ENCODE measurements at regions of chr11 and their contacts with region 1.

Region 1: GRCh38 chr11:9137293-9138132 is 46.1 kb upstream of the SCUBE2 start:
- DNase-seq: peak; percentile 27
- ATAC-seq: peak; percentile 100
- H3K4me3 ChIP-seq: no peak overlapping the region
- H3K27ac ChIP-seq: no peak overlapping the region
- H3K4me1 ChIP-seq: no peaks in the 10 kb centered on the region
- H3K27me3 ChIP-seq: no peaks in the 10 kb centered on the region
- CTCF ChIP-seq: peak; percentile 91 to 99 (median 97)
- EP300 ChIP-seq: no peak
- POLR2A ChIP-seq: no peak
- RAD21 ChIP-seq: peak; percentile 95

Region 2: DNA sequence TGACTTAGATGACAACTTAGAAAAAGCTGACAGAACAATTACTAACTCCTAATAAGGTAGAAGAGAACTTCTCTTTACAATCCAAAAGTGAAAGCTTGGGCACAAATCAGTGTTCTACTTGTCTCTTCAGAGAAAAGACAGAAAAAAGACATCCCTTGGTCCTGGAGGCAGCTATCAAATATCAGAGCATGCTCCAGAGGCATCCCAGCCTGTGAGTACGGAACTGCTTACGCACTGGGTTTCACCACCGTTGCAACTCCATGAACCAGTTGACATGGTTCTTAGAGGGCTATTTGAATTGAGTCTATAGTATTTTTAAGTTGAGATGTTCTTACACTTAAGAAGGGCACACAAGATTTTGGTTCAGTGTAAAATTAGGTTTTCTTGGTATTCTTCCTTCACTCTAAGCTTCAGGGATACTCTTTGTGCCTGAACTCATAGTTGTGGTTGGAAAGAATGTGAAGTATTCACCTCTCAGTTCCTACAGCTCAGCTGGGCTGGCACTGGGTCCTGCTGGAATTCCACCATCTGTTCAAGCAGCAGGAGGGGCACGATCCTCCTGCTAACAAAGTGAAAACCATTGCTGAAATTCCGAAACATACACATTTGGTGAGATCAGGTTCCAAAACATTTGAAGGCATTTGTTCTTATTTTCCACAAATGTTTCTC is 220.2 kb before region 1 on chr11:
- CTCF ChIA-PET with region 1: interaction called, 61 read pairs
- POLR2A ChIA-PET with region 1: interaction called, 7 read pairs
- RAD21 ChIA-PET with region 1: interaction called, 20 read pairs
- SMC1A ChIA-PET with region 1: interaction called, 20 read pairs
- in situ Hi-C with region 1: no loop called
- intact Hi-C with region 1: loop called (anchors 1 kb)
- DNase-seq: no peak
- ATAC-seq: no peak
- H3K4me3 ChIP-seq: no peak overlapping the region
- H3K27ac ChIP-seq: peak overlapping the region; percentile 21; the same call in 1 of the 2 replicates
- H3K4me1 ChIP-seq: peaks cover 16% of the 10 kb centered on the region
- H3K27me3 ChIP-seq: no peaks in the 10 kb centered on the region
- CTCF ChIP-seq: no peak
- EP300 ChIP-seq: no peak
- POLR2A ChIP-seq: no peak
- RAD21 ChIP-seq: no peak

Region 3: DNA sequence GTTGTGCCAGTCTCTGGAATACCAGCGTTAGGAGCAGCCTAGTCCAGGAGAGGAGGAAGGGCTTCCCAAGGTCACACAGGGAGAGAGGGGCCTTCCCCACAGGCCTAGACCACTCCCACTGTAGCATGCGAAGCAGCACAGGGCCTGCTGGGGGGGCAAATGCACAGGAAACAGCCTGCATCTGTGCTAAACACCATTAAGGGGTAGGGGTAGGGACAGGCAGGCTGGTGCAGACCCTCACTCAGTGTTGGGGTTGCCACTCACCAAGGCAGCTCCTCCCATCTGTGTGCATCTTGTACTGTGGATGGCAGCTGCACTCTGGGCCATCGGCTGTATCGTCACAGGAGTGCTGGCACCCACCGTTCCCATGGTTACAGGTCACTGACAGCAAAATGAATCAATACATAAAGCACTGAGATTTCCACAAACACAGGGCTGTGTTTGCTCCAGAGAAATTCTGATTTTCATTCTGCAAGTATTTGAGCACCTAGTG is 71.0 kb before region 1 on chr11:
- CTCF ChIA-PET with region 1: interaction called, 14 read pairs
- POLR2A ChIA-PET with region 1: no interaction called
- RAD21 ChIA-PET with region 1: interaction called, 9 read pairs
- SMC1A ChIA-PET with region 1: interaction called, 7 read pairs
- in situ Hi-C with region 1: no loop called
- intact Hi-C with region 1: no loop called
- DNase-seq: no peak
- ATAC-seq: no peak
- H3K4me3 ChIP-seq: no peak overlapping the region
- H3K27ac ChIP-seq: no peak overlapping the region
- H3K4me1 ChIP-seq: peaks cover 6% of the 10 kb centered on the region
- H3K27me3 ChIP-seq: no peaks in the 10 kb centered on the region
- CTCF ChIP-seq: no peak
- EP300 ChIP-seq: no peak
- POLR2A ChIP-seq: no peak
- RAD21 ChIP-seq: no peak

Region 4: GRCh38 chr11:9120664-9121485 is 16.6 kb before region 1 on chr11:
- CTCF ChIA-PET with region 1: interaction called, 17 read pairs
- POLR2A ChIA-PET with region 1: no interaction called
- RAD21 ChIA-PET with region 1: interaction called, 9 read pairs
- SMC1A ChIA-PET with region 1: interaction called, 6 read pairs
- in situ Hi-C with region 1: no loop called
- intact Hi-C with region 1: no loop called
- DNase-seq: no peak
- ATAC-seq: peak; percentile 70
- H3K4me3 ChIP-seq: no peak overlapping the region
- H3K27ac ChIP-seq: no peak overlapping the region
- H3K4me1 ChIP-seq: no peaks in the 10 kb centered on the region
- H3K27me3 ChIP-seq: no peaks in the 10 kb centered on the region
- CTCF ChIP-seq: peak; percentile 18 to 20 (median 19); a peak in 3 of 6 replicates
- EP300 ChIP-seq: no peak
- POLR2A ChIP-seq: no peak
- RAD21 ChIP-seq: peak; percentile 19; the same call in 1 of the 2 replicates

Region 5: DNA sequence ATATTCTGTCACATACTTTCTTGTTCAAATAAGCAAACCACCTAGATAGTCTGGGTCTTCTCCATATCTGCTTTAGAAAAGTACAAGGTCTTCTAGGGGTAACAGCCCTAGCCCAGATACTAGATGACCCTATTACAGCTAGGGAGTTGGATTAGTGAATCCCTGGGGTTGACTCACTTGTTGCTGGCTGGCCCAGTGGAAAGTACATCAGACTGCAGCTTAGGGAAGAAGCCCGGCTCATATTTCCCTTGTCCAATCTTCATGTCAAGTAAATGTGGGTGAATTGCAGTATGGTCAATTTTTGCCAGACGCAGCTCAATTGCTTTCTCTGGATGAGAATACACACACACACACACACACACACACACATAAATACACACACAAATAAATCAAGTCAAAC is 32.9 kb after region 1 on chr11:
- CTCF ChIA-PET with region 1: interaction called, 10 read pairs
- POLR2A ChIA-PET with region 1: no interaction called
- RAD21 ChIA-PET with region 1: no interaction called
- SMC1A ChIA-PET with region 1: no interaction called
- in situ Hi-C with region 1: no loop called
- intact Hi-C with region 1: no loop called
- DNase-seq: no peak
- ATAC-seq: no peak
- H3K4me3 ChIP-seq: no peak overlapping the region
- H3K27ac ChIP-seq: no peak overlapping the region
- H3K4me1 ChIP-seq: no peaks in the 10 kb centered on the region
- H3K27me3 ChIP-seq: no peaks in the 10 kb centered on the region
- CTCF ChIP-seq: no peak
- EP300 ChIP-seq: no peak
- POLR2A ChIP-seq: no peak
- RAD21 ChIP-seq: no peak

Region 6: GRCh38 chr11:9550191-9550628 is 412.7 kb after region 1 on chr11:
- CTCF ChIA-PET with region 1: no interaction called
- POLR2A ChIA-PET with region 1: no interaction called
- RAD21 ChIA-PET with region 1: no interaction called
- SMC1A ChIA-PET with region 1: no interaction called
- in situ Hi-C with region 1: no loop called
- intact Hi-C with region 1: no loop called
- DNase-seq: no peak
- ATAC-seq: no peak
- H3K4me3 ChIP-seq: no peak overlapping the region
- H3K27ac ChIP-seq: no peak overlapping the region
- H3K4me1 ChIP-seq: 0 out of 2 replicates have a peak, but pooled peaks cover 7% of the 10 kb centered on the region
- H3K27me3 ChIP-seq: no peaks in the 10 kb centered on the region
- CTCF ChIP-seq: no peak
- EP300 ChIP-seq: no peak
- POLR2A ChIP-seq: no peak
- RAD21 ChIP-seq: no peak

Measured in GM12878 (cell line).